ENCODE measurements at regions of chr11 and their contacts with region 1.

Region 1: GRCh38 chr11:110069158-110069737 is 23.9 kb upstream of the ZC3H12C start:
- DNase-seq: peak; percentile 88
- ATAC-seq: peak; percentile 73
- H3K4me3 ChIP-seq: no peak overlapping the region
- H3K27ac ChIP-seq: no peak overlapping the region
- H3K4me1 ChIP-seq: peaks cover 10% of the 10 kb centered on the region
- H3K27me3 ChIP-seq: no peaks in the 10 kb centered on the region
- CTCF ChIP-seq: no peak
- POLR2A ChIP-seq: no peak
- RAD21 ChIP-seq: no peak

Region 2: DNA sequence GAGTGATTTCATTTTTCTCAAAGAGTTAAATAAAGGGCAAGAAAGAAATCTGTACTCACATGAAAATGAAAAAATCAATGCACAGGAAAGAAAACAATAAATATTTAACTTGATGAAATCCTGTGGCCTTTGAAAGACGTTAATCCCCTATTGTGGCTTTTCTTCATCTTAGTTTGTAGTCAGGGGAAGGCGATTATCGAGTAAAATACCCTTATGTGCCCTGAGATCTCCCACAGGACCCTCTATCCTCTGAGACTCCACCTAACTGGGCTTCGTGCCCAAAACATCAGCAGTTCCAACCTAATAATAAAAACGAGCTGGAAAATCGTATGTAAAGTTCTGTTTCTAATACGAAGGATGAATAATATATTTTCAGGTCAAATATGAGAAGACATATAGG is 184.2 kb before region 1 on chr11:
- CTCF ChIA-PET with region 1: no interaction called
- POLR2A ChIA-PET with region 1: no interaction called
- dilution Hi-C with region 1: no loop called
- in situ Hi-C with region 1: no loop called
- intact Hi-C with region 1: no loop called
- DNase-seq: no peak
- ATAC-seq: no peak
- H3K4me3 ChIP-seq: no peak overlapping the region
- H3K27ac ChIP-seq: no peak overlapping the region
- H3K4me1 ChIP-seq: no peaks in the 10 kb centered on the region
- H3K27me3 ChIP-seq: peaks cover 6% of the 10 kb centered on the region
- CTCF ChIP-seq: no peak
- POLR2A ChIP-seq: no peak
- RAD21 ChIP-seq: no peak

Region 3: DNA sequence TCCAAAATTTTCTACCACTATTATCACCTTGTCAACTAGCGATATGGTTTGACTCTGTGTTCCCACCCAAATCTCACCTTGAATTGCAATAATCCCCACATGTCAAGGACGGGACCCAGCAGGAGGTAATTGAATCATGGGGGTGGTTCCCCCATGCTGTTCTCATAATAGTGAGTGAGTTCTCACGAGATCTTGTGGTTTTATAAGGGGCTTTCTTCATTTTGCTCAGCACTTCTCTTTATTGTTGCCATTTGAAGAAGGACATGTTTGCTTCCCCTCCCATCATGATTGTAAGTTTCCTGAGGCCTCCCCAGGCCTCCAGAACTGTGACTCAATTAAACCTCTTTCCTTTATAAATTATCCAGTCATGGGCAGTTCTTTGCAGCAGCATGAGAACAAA is 49.6 kb before region 1 on chr11:
- CTCF ChIA-PET with region 1: no interaction called
- POLR2A ChIA-PET with region 1: no interaction called
- dilution Hi-C with region 1: no loop called
- in situ Hi-C with region 1: no loop called
- intact Hi-C with region 1: loop called (anchors 5 kb)
- DNase-seq: no peak
- ATAC-seq: no peak
- H3K4me3 ChIP-seq: no peak overlapping the region
- H3K27ac ChIP-seq: no peak overlapping the region
- H3K4me1 ChIP-seq: peaks cover 5% of the 10 kb centered on the region
- H3K27me3 ChIP-seq: no peaks in the 10 kb centered on the region
- CTCF ChIP-seq: no peak
- POLR2A ChIP-seq: no peak
- RAD21 ChIP-seq: no peak

Region 4: DNA sequence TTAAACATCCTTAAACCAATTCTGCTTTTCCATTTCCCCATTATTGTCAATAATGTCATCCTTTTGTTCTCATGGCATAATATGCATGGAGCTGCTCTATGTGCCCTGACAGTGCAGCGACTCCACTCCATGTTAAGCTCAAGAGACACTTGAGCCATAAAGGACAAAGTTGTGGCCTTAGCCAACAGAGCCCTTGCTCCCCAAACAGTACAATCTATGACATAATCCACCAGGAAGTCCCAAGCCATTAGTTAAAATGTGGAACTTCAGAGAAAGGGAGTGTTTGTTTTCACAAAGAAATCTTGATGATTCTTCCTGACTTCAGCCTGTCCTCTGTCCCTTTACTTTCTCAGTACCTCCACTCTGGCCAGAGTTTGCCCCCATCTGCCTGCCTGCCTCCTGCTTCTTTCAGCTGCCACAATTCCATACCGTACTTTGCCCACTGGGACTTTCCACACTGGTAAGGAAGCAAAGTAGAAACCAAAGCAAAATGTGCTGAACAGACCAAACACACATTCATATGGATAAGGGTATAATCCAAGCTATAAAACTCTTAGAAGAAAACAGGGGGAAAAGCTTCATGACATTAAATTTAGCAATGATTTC is 22.4 kb before region 1 on chr11:
- CTCF ChIA-PET with region 1: no interaction called
- POLR2A ChIA-PET with region 1: no interaction called
- dilution Hi-C with region 1: no loop called
- in situ Hi-C with region 1: no loop called
- intact Hi-C with region 1: loop called (anchors 1 kb)
- DNase-seq: no peak
- ATAC-seq: no peak
- H3K4me3 ChIP-seq: no peak overlapping the region
- H3K27ac ChIP-seq: no peak overlapping the region
- H3K4me1 ChIP-seq: 0 out of 2 replicates have a peak, but pooled peaks cover 2% of the 10 kb centered on the region
- H3K27me3 ChIP-seq: no peaks in the 10 kb centered on the region
- CTCF ChIP-seq: no peak
- POLR2A ChIP-seq: no peak
- RAD21 ChIP-seq: no peak

Measured in IMR-90 (cell line).